ENCODE measurements at regions of chr12 and their contacts with region 1.

Region 1: DNA sequence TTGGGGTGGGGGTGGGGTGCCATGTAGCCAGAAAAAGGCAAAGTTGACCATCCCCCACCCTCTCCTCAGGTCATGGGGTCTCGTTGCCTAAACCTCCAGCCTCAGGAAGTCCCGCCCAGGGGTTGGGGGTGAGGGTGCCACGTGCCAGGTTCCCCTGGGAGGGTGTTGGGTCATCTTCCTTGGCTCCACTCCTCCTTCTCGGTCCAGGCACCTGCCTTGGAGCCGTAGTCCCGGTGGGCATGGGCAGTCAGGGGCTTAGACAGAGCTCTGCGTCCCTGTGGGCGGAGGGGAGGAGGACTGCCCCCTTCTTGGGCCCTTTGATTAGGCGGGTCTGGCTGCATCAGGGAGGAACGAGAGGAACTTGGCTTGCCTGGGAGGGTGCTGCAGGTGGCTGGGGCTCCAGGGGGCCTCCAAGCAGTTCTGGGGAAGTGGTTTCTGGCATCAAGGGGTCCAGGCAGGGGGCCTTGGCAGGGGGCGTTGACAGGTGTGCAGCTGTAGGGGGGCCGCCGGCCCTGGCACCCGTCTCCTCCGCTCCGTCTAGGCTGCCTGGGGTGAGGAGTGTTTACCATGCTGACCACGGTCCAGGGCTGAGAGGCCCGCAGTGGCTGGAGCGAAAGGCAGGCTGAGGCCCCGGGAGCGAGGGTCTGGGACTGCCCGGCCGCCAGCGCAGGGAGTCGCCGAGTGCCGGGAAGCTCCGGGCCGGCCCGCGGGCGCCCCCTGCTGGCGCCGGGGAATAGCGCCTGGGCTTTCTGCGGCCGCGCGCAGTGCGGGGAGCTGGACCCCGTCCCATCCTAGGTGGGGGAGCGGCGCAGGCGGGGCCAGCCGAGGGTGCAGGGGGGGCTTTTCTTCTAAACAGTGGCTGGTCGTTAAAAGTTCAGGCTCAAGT is 7.9 kb downstream of the SETD1B start:
- DNase-seq: no peak
- H3K4me3 ChIP-seq: peak overlapping the region; percentile 62 to 71 (median 66)
- H3K27ac ChIP-seq: peak overlapping the region; percentile 80 to 86 (median 81)
- H3K4me1 ChIP-seq: peaks cover 47 to 75% (median 63%) of the 10 kb centered on the region in 4 donors
- H3K27me3 ChIP-seq: no peaks in the 10 kb centered on the region
- CTCF ChIP-seq: peak in 2 of 3 experiments; percentile 97 to 100
- EP300 ChIP-seq: no peak
- POLR2A ChIP-seq: no peak

Region 2: DNA sequence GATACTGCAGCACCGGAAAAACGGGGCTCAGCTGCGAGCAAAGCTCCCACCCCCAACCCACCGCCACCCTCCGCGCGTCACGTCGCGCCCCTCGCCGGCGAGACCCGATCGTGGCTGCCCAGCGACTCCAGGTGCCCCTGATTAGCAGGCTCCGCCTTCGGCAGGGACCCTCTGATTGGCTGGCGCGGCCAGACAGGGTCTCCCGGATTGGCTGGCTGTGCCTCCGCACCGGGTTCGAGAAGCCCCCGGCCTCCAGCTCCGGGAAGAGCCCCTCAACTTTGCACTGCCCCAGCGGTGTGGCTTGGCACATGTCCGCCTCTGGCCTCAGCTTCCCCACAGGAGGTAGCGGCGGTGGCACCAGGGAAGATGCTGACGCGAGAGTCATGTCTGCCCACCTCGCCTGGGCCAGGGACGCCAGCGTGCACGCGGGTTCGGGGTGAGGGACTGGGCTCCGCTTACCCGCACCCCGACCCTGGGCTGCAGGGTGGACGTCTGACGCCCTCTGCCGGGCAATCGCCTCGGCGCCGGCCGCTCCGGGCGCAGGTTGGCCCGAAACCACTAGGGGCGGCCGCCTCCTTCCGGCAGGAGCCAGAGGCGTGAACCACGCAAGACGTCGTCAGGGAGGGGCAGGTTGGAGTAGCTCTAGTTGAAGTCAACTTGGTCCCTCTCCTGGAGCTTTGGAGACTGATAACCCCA is 17.7 kb before region 1 on chr12:
- intact Hi-C with region 1: loop called (anchors 1 kb)
- DNase-seq: peak; percentile 96
- H3K4me3 ChIP-seq: peak overlapping the region; percentile 59 to 64 (median 60)
- H3K27ac ChIP-seq: peak overlapping the region; percentile 97 to 100 (median 100)
- H3K4me1 ChIP-seq: peaks cover 66 to 77% (median 76%) of the 10 kb centered on the region in 4 donors
- H3K27me3 ChIP-seq: no peaks in the 10 kb centered on the region
- CTCF ChIP-seq: peak; percentile 99 to 100 (median 100)
- EP300 ChIP-seq: no peak
- POLR2A ChIP-seq: peak; percentile 15

Region 3: GRCh38 chr12:121888478-121889266 is 77.0 kb after region 1 on chr12 and contains the start of gene PSMD9:
- intact Hi-C with region 1: loop called (anchors 2 kb)
- DNase-seq: peak; percentile 99
- H3K4me3 ChIP-seq: peak within 1 kb of the TSS; percentile 65 to 98 (median 70)
- H3K27ac ChIP-seq: peak within 1 kb of the TSS; percentile 88 to 99 (median 92)
- H3K4me1 ChIP-seq: peaks cover 19 to 39% (median 30%) of the 10 kb centered on the region in 4 donors
- H3K27me3 ChIP-seq: peaks cover 0 to 8% (median 0%) of the 10 kb centered on the region in 4 donors
- CTCF ChIP-seq: peak; percentile 54 to 72 (median 65)
- EP300 ChIP-seq: no peak
- POLR2A ChIP-seq: peak; percentile 67
- total RNA-seq, gene PSMD9: 22.4 to 63.7 (median 44.4) TPM

Measured in esophagus muscularis mucosa (tissue), 4 donors.